MCF 10A (cell line): ENCODE measurements at regions of chr5 and their contacts with region 1.

Region 1: DNA sequence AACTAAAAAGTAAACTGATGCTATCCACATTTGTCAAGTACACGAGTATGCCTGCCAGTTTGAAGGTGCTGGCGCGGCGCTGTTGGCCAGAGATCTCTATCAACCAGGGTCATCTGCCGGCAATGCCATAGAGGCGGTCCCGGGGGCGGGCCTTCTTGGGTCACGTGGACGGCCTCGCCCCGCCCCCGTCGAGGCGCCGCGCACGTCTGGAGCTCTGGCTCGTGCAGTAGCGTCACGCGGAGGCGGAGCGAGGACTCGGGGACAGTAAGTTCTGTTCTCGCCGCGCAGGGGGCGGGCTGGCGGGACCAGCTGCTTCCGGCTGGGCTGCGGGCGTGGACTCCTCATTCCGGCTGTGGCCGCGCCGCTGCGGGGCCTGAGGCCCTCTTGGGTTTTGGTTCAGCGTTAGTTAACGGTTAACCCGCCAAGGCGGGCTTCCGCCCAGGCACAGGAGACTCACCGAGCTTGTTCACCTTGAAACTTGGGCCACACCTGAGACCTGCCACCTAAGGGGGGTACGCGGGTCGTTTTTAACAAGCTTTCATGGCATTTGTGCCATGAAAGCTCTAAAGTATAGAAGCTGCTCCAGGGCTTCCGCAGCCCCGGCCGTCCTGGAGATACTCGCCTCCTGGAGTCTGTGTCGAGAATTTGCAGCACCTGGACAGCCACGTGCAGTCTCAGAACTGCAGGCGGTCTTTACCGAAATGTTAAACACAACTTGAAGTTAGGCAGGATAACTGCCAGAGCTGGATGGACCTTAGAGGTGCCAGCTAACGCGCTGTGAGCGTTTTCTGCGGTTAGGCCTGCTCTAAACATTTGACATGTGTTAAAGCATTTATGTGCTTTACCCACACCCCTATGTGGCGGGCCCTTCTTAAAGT is at the start of gene RFESD:
- DNase-seq: peak; percentile 96
- H3K4me3 Mint-ChIP-seq: peak within 1 kb of the TSS; percentile 74
- H3K27ac Mint-ChIP-seq: peak within 1 kb of the TSS; percentile 89
- H3K4me1 Mint-ChIP-seq: peaks cover 15% of the 10 kb centered on the region
- H3K27me3 Mint-ChIP-seq: no peaks in the 10 kb centered on the region
- CTCF ChIP-seq: no peak
- total RNA-seq, gene RFESD: 4.2 and 5.9 TPM in 2 replicates

Region 2: GRCh38 chr5:95664204-95664786 is 17.5 kb after region 1 on chr5:
- CTCF ChIA-PET with region 1: interaction called, 16 read pairs
- POLR2A ChIA-PET with region 1: interaction called, 11 read pairs
- intact Hi-C with region 1: no loop called
- DNase-seq: peak; percentile 46
- H3K4me3 Mint-ChIP-seq: no peak overlapping the region
- H3K27ac Mint-ChIP-seq: no peak overlapping the region
- H3K4me1 Mint-ChIP-seq: no peaks in the 10 kb centered on the region
- H3K27me3 Mint-ChIP-seq: no peaks in the 10 kb centered on the region
- CTCF ChIP-seq: peak; percentile 56

Region 3: GRCh38 chr5:95773335-95774059 is 126.7 kb after region 1 on chr5:
- CTCF ChIA-PET with region 1: interaction called, 7 read pairs
- POLR2A ChIA-PET with region 1: interaction called, 15 read pairs
- intact Hi-C with region 1: no loop called
- DNase-seq: peak; percentile 83
- H3K4me3 Mint-ChIP-seq: no peak overlapping the region
- H3K27ac Mint-ChIP-seq: no peak overlapping the region
- H3K4me1 Mint-ChIP-seq: peaks cover 13% of the 10 kb centered on the region
- H3K27me3 Mint-ChIP-seq: no peaks in the 10 kb centered on the region
- CTCF ChIP-seq: no peak

Region 4: GRCh38 chr5:95853490-95853889 is 206.7 kb after region 1 on chr5:
- CTCF ChIA-PET with region 1: interaction called, 149 read pairs
- POLR2A ChIA-PET with region 1: interaction called, 10 read pairs
- intact Hi-C with region 1: no loop called
- DNase-seq: no peak
- H3K4me3 Mint-ChIP-seq: no peak overlapping the region
- H3K27ac Mint-ChIP-seq: no peak overlapping the region
- H3K4me1 Mint-ChIP-seq: peaks cover 11% of the 10 kb centered on the region
- H3K27me3 Mint-ChIP-seq: no peaks in the 10 kb centered on the region
- CTCF ChIP-seq: no peak